Cardiac septum (tissue), 1 donor: ENCODE measurements at regions of chr6 and their contacts with region 1.

Region 1: GRCh38 chr6:73675466-73676098 is 20.4 kb upstream of the CD109 start:
- DNase-seq: peak; percentile 88

Region 2: GRCh38 chr6:73732845-73733675 is 57.5 kb after region 1 on chr6:
- intact Hi-C with region 1: loop called (anchors 1 kb)
- DNase-seq: no peak

Region 3: GRCh38 chr6:73752943-73753342 is 77.4 kb after region 1 on chr6:
- intact Hi-C with region 1: no loop called
- DNase-seq: no peak

Region 4: DNA sequence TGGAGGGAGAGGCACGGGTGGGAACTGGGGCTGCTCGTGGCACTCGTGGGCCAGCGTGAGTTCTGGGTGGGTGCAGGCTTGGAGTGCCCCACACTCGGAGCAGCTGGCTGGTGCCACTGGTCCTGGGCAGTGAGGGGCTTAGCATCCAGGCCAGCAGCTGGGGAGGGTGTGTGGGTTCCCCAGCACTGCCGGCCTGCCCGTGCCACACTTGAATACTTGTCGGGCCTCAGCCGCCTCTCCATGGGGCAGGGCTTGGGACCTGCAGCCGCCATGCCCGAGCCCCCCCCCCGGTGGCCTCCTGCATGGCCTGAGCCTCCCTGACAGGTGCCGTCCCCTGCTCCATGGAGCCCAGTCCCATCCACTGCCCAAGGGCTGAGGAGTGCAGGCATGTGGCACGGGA is 227.6 kb after region 1 on chr6:
- intact Hi-C with region 1: no loop called
- DNase-seq: no peak